ENCODE measurements at regions of chr12 and their contacts with region 1.

Region 1: DNA sequence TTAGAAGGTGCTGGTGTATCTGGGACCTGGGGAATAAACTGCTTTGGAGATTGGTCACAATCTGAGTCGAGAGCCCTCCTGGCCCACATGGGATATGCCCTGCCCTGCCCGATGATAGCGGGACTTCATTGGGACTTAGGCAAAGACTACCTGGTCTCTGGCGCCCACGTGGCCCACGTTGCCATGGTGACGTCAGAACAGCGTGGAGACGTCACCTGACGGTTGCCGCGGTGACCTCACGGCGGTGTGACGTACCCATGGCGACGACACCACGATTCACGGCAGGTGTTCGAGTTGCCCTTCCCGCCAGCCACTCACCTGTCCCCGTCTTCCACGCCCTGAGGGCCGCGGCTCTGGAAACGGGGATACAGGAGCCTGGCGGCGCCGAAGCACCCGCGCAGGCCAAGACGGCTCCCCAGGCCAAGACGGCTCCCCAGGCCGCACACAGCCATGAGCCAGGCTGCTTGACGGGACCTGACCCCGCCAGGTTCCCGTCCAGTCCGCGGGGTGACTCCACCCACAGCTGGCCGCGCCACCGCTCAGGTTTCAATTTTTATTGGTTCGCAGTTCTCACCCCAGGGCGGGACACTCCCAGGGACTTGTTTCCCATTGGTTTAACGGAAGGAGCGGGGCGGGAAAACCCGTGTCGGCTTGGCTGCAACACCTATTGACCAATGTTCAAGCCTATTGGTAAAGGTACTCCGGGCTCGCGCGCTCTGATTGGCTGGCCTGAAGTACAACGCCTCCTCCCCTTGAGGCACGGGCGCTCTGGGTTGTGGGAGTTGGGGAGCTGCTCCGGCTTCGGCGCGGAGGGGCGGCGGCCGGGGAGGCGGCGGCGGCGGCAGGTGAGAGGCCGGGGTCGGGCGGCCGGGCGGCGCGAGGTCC is at the starts of genes MMAB and MVK:
- DNase-seq: peak; percentile 99
- H3K4me3 ChIP-seq: peak within 1 kb of the TSS; percentile 60 to 76
- H3K27ac ChIP-seq: peak within 1 kb of the TSS; percentile 80 to 90
- H3K4me1 ChIP-seq: peaks cover 4% of the 10 kb centered on the region
- H3K27me3 ChIP-seq: no peaks in the 10 kb centered on the region
- CTCF ChIP-seq: peak in 2 of 4 experiments; percentile 11 to 14
- POLR2A ChIP-seq: peak; percentile 43
- total RNA-seq, gene MMAB: 23.1 to 79.2 TPM
- total RNA-seq, gene MVK: 13.4 to 54.1 TPM

Region 2: DNA sequence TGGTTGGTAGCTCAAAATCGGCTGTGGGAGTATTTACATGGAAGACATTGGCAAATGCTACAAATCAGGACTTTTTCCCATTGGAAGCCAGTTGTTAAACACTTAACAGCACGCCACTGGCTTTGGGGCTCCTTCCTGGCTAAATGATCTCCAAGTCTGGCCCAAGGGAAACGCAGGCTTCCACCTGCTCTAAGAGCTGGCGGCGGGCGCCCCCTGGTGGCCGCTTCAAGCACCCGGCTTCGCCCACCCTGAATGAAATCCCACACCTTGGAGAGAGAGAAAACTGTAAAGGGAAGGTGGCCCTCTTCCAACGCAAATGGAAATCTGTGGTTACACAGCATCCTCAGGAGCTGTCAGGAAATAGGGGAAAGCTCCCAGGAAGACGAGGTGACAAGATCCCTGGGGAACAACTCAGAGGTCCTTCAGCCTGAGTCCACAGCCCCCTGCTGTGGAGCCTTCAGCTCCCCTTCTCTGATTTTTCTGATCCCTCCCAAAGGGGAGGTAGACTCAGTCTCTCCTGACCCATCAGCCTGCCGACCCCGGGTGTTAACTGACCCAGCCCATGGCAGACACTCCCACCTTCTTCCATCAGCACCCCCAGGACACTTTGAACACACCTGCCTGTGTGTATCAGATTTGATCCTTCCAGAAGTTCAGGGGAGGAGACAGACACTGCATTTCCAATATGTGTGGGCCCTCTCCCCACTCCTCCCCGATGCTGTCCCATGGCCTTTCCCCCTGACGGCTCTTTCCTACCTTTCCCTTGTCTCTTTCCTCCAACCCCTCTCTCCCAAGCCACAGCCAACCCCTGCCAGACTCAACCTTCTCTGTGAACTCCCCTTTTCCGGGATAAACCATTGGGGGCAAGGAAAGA is 955.0 kb before region 1 on chr12:
- intact Hi-C with region 1: no loop called
- DNase-seq: peak; percentile 57
- H3K4me3 ChIP-seq: no peak overlapping the region
- H3K27ac ChIP-seq: no peak overlapping the region
- H3K4me1 ChIP-seq: no peaks in the 10 kb centered on the region
- H3K27me3 ChIP-seq: no peaks in the 10 kb centered on the region
- CTCF ChIP-seq: peak; percentile 90 to 97 (median 91)
- POLR2A ChIP-seq: no peak

Region 3: GRCh38 chr12:109428037-109428629 is 145.1 kb before region 1 on chr12:
- intact Hi-C with region 1: loop called (anchors 10 kb)
- DNase-seq: peak; percentile 72
- H3K4me3 ChIP-seq: no peak overlapping the region
- H3K27ac ChIP-seq: no peak overlapping the region
- H3K4me1 ChIP-seq: no peaks in the 10 kb centered on the region
- H3K27me3 ChIP-seq: no peaks in the 10 kb centered on the region
- CTCF ChIP-seq: peak; percentile 81 to 94 (median 88)
- POLR2A ChIP-seq: no peak

Measured in prostate gland (tissue), 2 donors.